Dorsolateral prefrontal cortex (tissue), 120 donors: ENCODE measurements at regions of chr3 and their contacts with region 1.

Region 1: GRCh38 chr3:159260049-159260662 is 458.3 kb downstream of the MFSD1 start:
- DNase-seq: peak in 3 of 10 donors; percentile 26 to 50 (median 28)
- H3K4me3 ChIP-seq: no peak overlapping the region
- H3K27ac ChIP-seq: no peak overlapping the region
- H3K27me3 ChIP-seq: no peaks in the 10 kb centered on the region
- CTCF ChIP-seq: peak; percentile 69 to 98 (median 90)

Region 2: DNA sequence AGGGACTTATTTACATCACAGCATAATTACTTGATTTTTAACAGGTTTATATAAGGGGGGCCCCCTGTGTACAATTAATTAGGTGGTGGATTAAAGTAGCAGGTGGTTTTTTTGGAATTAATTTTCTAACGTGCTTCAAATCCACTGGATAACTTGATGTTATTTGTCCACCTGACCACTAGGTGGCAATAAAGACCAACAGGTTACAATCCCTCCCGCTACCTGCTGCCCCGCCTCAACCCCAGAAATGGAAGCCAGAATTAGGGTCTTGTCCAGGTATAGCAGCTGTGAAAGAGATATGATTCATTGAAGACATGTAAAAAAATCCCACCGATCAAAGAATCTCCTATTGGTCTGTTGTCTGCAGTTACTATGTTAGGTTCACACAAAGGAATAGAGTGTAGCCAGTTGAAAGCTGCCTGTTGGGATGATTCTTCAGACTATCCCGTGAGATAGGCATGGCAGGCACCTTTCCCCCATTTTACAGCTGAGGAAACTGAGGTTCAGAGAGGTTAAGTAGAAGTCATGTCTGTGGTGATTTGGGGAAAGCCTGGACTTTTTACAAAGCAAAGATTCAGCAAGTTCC is 414.3 kb before region 1 on chr3:
- intact Hi-C with region 1: loop called (anchors 2 to 5 kb)
- DNase-seq: peak in 1 of 10 donors; percentile 9
- H3K4me3 ChIP-seq: no peak overlapping the region
- H3K27ac ChIP-seq: no peak overlapping the region
- H3K27me3 ChIP-seq: no peaks in the 10 kb centered on the region
- CTCF ChIP-seq: peak; percentile 59 to 87 (median 73)

Region 3: GRCh38 chr3:159130108-159130507 is 130.0 kb before region 1 on chr3:
- intact Hi-C with region 1: loop called in 1 of 2 experiments (anchors 5 kb)
- DNase-seq: no peak
- H3K4me3 ChIP-seq: no peak overlapping the region
- H3K27ac ChIP-seq: no peak overlapping the region
- H3K27me3 ChIP-seq: no peaks in the 10 kb centered on the region
- CTCF ChIP-seq: peak in 21 of 56 donors; percentile 6 to 48 (median 28)

Region 4: GRCh38 chr3:159273608-159274007 is 13.5 kb after region 1 on chr3:
- intact Hi-C with region 1: no loop called
- DNase-seq: no peak
- H3K4me3 ChIP-seq: peak overlapping the region in 56 of 59 donors; percentile 4 to 60 (median 40)
- H3K27ac ChIP-seq: peak overlapping the region in 17 of 59 donors; percentile 2 to 67 (median 39)
- H3K27me3 ChIP-seq: no peaks in the 10 kb centered on the region
- CTCF ChIP-seq: no peak

Region 5: GRCh38 chr3:159305017-159305416 is 44.9 kb after region 1 on chr3:
- intact Hi-C with region 1: no loop called
- DNase-seq: no peak
- H3K4me3 ChIP-seq: no peak overlapping the region
- H3K27ac ChIP-seq: no peak overlapping the region
- H3K27me3 ChIP-seq: no peaks in the 10 kb centered on the region
- CTCF ChIP-seq: no peak

Region 6: DNA sequence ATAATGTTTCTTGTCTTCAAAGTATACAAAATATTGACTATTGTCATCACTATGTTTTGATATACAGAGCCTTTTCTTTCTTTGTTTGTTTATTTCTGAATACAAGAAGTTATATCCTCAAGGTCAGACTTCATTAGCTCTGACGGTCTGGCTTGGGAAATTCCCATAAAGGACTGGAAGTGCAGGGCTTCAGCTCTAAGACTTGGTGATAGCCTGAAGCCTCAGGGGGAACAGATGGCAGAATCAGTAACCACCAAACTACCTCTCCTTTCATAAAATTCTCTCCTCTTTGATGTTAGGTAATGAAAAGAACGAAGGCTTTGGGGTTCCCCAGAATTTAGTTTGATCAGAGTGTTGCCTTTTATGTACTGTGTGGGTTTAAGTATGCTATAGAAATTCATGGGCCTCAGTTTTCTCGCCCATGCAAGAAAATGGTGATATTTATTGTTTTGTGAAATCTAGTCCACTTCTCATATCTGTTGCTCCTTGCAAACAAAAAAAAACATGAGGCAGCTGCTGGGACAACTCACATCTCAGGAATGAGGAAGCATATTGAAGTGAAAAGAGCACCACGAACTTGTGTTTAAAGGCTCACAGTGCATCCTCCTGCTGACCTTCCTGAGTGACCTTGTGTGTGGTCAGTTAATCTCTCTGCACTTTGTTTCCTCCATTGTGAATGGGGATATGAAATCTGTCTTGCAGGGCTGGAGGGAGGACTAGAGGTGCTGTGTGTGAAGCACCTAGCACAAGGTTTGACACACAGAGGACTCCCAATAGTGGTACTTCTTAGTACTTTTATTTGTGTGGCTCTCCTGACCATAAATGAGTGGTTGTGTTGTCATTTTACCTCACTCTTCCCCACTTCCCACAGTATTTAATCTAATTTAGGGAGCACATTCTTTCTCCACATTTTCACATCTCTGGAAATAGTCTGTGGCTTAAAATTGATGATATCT is 158.7 kb after region 1 on chr3:
- intact Hi-C with region 1: no loop called
- DNase-seq: no peak
- H3K4me3 ChIP-seq: no peak overlapping the region
- H3K27ac ChIP-seq: no peak overlapping the region
- H3K27me3 ChIP-seq: no peaks in the 10 kb centered on the region
- CTCF ChIP-seq: no peak

Region 7: GRCh38 chr3:159763602-159764489 is 503.7 kb after region 1 on chr3:
- intact Hi-C with region 1: loop called in 1 of 2 experiments (anchors 2 kb)
- DNase-seq: peak in 9 of 10 donors; percentile 50 to 84 (median 70)
- H3K4me3 ChIP-seq: peak overlapping the region; percentile 64 to 90 (median 81)
- H3K27ac ChIP-seq: peak overlapping the region; percentile 77 to 99 (median 94)
- H3K27me3 ChIP-seq: no peaks in the 10 kb centered on the region
- CTCF ChIP-seq: peak in 43 of 56 donors; percentile 9 to 55 (median 37)

Region 8: DNA sequence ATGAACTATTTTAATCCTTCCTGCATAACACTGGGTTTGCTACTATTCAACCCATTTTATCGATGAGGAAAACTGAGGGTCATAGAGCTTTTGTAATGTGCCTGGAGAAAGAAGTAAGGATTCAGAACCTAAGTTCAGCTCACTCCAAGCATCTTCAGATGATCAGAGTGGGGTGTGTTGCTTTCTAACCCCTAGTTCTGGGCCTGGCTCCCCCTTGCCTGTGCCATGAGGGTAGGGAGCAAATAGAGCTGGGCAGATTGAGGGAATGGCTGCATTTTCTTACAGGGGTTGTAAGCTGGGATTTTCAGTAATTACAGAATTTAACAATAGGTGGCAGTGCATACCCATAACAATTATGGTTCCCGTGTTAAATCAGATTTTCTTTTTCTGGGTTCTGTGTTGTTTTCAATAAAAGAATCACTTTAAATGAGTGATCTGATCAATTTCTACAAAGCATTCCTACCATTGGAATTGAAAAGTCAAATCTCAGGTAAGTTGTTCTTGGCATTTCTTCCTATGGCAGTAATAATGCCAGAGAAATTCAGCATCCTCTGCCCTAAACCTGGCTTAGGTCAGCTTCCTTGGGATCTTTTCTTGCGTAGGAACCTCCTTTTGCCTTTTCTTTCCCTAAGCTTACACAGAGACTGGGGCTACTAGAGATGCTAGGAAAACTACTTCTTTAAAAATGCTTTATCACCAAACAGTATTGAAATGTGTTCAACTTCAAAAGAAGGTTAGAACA is 624.7 kb after region 1 on chr3:
- intact Hi-C with region 1: loop called (anchors 10 kb)
- DNase-seq: no peak
- H3K4me3 ChIP-seq: peak overlapping the region in 6 of 59 donors; percentile 4 to 17 (median 9)
- H3K27ac ChIP-seq: peak overlapping the region in 58 of 59 donors; percentile 11 to 98 (median 82)
- H3K27me3 ChIP-seq: no peaks in the 10 kb centered on the region
- CTCF ChIP-seq: peak; percentile 31 to 87 (median 71)

Region 9: GRCh38 chr3:160486459-160486869 is 1226.3 kb after region 1 on chr3:
- intact Hi-C with region 1: loop called in 1 of 2 experiments (anchors 10 kb)
- DNase-seq: no peak
- H3K4me3 ChIP-seq: peak overlapping the region in 32 of 59 donors; percentile 14 to 68 (median 48)
- H3K27ac ChIP-seq: peak overlapping the region in 29 of 59 donors; percentile 35 to 86 (median 73)
- H3K27me3 ChIP-seq: no peaks in the 10 kb centered on the region
- CTCF ChIP-seq: peak; percentile 55 to 92 (median 78)